ENCODE measurements at regions of chr9 and their contacts with region 1.

Region 1: DNA sequence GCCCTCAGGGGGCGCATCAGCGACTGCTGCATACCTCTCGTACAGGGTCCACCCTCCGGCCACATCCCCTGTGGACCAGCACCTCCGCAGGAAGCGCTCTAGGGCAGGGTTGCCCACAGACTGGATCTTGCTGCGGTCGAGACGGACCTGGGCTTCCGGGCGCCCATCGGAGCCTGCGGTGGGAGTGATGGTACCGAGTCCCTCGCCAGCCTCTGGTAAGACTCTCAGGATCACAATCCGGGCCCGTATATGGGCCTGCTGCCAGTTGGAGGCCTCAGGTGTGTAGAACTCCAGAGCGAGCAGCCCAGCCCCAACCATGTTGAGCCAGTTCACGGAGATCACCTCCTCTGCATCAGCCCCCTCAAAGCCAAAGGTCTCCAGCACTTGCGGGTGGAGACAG is 323.0 kb downstream of the ANXA1 start:
- DNase-seq: no peak
- H3K4me3 ChIP-seq: no peak overlapping the region
- H3K27ac ChIP-seq: no peak overlapping the region
- H3K4me1 ChIP-seq: no peaks in the 10 kb centered on the region
- H3K27me3 ChIP-seq: no peaks in the 10 kb centered on the region
- CTCF ChIP-seq: no peak

Region 2: DNA sequence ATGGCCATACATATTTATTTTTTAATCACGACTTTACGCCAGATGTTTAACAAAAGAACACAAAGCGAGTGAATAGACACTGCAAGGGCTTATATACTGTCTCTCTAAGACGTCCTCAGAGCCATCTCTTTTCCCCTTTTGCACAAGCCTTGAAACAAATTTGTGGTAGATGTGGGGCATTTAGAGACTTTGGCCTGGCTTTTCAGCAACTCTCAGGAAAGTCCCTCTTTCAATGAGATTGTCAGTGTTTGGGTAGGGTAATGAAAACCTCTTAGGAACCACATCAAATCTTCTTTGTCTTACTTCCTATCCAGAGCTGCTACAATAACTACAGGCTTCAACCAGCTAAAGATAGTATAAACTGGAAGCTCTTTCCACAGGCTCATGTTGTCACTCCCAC is 57.0 kb after region 1 on chr9:
- CTCF ChIA-PET with region 1: no interaction called
- POLR2A ChIA-PET with region 1: no interaction called
- intact Hi-C with region 1: loop called (anchors 10 kb)
- DNase-seq: no peak
- H3K4me3 ChIP-seq: no peak overlapping the region
- H3K27ac ChIP-seq: no peak overlapping the region
- H3K4me1 ChIP-seq: no peaks in the 10 kb centered on the region
- H3K27me3 ChIP-seq: no peaks in the 10 kb centered on the region
- CTCF ChIP-seq: no peak

Measured in A673 (cell line).